CD4-positive, alpha-beta T cell (primary cell): ENCODE measurements at regions of chrX and their contacts with region 1.

Region 1: DNA sequence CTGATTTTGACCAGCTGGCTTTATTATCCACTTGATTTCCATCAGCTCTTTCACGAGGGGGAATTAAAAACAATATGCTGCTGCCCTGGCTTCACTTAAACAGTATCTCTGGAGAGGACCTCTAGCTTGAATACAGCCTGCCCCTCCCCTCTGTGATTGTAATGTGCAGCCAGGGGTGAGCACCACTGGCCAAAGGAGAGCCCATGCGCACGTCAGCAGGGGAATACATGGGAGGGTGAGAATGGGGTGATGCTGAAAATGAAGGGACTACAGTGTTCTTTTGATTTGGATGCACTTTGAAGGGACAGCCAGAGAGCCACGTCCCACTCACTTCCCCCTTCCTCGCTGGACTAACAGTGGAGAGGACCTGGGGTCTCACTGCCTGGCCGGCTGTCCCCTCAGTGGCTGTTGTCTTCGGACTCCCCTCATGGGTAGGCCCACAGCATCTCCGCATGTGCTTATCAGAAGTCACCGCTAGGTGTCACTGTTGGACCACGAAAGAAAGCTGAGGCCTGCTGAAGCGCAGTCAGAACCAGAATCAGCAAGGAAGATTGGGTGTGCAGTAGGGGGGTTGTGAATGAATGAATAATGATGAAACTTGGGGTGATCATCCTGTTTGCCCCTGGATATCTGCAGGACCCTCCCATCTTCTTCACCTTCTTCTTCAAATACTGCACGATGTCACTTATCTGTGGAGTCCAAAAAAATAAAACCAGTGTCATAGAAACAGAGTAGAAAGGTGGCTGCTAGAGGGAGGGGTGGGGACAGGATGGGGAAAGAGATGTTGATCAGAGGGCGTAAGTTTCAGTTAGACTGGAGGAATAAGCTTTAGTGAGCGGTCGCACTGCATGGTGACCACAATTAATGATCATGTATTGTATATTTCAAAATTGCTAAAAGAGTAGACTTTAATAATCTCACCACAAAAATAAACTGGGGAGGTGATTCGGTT is 32.8 kb downstream of the CLCN4 start:
- DNase-seq: peak; percentile 40 to 83 (median 64)
- ATAC-seq: no peak
- H3K4me3 ChIP-seq: no peak overlapping the region
- H3K4me3 Mint-ChIP-seq: no peak overlapping the region
- H3K27ac ChIP-seq: no peak overlapping the region
- H3K27ac Mint-ChIP-seq: no peak overlapping the region
- H3K4me1 ChIP-seq: no peaks in the 10 kb centered on the region
- H3K4me1 Mint-ChIP-seq: no peaks in the 10 kb centered on the region
- H3K27me3 ChIP-seq: no peaks in the 10 kb centered on the region
- H3K27me3 Mint-ChIP-seq: peaks cover 4% of the 10 kb centered on the region
- CTCF ChIP-seq: peak; percentile 58

Region 2: GRCh38 chrX:11137543-11138139 is 948.0 kb after region 1 on chrX:
- CTCF ChIA-PET with region 1: interaction called, 5 read pairs
- POLR2A ChIA-PET with region 1: no interaction called
- intact Hi-C with region 1: loop called (anchors 1 kb)
- DNase-seq: peak in 3 of 14 experiments; percentile 22 to 65 (median 64)
- ATAC-seq: no peak
- H3K4me3 ChIP-seq: no peak overlapping the region
- H3K4me3 Mint-ChIP-seq: no peak overlapping the region
- H3K27ac ChIP-seq: no peak overlapping the region
- H3K27ac Mint-ChIP-seq: no peak overlapping the region
- H3K4me1 ChIP-seq: no peaks in the 10 kb centered on the region
- H3K4me1 Mint-ChIP-seq: no peaks in the 10 kb centered on the region
- H3K27me3 ChIP-seq: peaks cover 0 to 2% of the 10 kb centered on the region in 2 experiments
- H3K27me3 Mint-ChIP-seq: peaks cover 15% of the 10 kb centered on the region
- CTCF ChIP-seq: peak; percentile 65